Endothelial cell of umbilical vein (primary cell): ENCODE measurements at regions of chr18 and their contacts with region 1.

Region 1: GRCh38 chr18:8654503-8655451 is 45.5 kb downstream of the RAB12 start:
- DNase-seq: peak; percentile 29
- H3K4me3 ChIP-seq: no peak overlapping the region
- H3K27ac ChIP-seq: no peak overlapping the region
- H3K4me1 ChIP-seq: peaks cover 2% of the 10 kb centered on the region
- H3K27me3 ChIP-seq: peaks cover 2 to 6% of the 10 kb centered on the region in 2 experiments
- CTCF ChIP-seq: peak; percentile 21 to 45
- POLR2A ChIP-seq: no peak

Region 2: DNA sequence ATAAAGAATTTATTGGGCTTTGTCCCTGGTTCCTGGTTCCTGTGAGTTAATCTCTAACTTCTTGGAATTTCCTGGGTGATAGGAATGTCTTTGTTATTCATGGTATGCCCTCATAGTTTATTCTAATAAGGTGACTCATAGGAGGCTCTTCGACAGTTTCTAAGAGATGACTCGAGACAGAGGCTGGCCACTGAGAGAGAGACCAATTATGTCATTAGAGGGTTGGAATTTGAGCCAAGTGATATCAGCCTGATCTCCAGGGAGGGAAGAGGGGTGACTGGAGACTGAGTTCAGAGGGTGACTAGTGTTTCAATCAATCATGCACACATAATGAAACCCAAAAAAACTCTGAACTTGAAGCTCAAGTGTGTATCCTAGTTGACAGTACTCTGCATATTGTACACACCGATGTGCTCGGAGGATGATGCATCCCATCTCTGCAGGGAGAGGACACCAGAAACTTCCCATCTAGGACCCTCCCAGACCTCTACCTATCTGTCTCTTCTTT is 236.2 kb after region 1 on chr18:
- CTCF ChIA-PET with region 1: no interaction called
- POLR2A ChIA-PET with region 1: no interaction called
- dilution Hi-C with region 1: no loop called
- intact Hi-C with region 1: loop called (anchors 10 kb)
- DNase-seq: peak; percentile 83
- H3K4me3 ChIP-seq: no peak overlapping the region
- H3K27ac ChIP-seq: peak overlapping the region; percentile 67
- H3K4me1 ChIP-seq: peaks cover 21% of the 10 kb centered on the region
- H3K27me3 ChIP-seq: no peaks in the 10 kb centered on the region
- CTCF ChIP-seq: no peak
- POLR2A ChIP-seq: no peak

Region 3: DNA sequence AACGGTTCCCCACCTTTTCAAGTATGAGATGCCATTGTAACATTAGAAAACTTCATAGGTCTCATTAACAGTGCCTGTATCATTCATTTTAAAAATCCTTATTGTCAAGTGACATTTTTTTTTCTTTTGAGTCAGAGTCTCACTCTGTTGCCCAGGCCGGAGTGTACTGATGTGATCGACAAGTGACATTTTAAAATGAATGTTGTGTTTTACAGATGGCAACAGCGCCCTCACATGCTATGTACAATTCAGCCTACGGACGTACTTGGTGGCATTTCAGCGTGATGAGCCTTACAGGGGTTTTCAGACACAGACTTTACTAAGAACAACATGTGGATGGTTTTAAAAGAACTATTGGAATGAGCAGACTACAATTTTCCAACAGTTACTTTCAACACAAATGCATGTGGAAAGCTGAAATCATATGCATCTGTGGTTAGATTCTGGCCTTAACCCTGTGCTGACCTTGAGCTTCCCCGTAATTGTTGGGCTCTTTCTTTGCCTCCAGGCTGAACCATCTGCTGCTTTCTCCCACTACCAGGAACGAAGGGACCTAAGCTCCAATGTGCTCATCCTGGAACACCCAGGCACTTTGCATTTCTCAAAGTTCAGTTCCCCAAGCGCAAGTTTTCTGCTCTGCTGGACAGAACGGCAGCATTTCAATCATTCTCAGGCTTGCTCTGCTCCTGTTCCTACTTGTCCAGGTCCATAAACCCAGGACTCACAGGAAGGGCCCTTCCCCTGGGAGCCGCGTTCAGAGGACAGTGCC is 327.8 kb after region 1 on chr18:
- CTCF ChIA-PET with region 1: interaction called, 146 read pairs
- POLR2A ChIA-PET with region 1: no interaction called
- dilution Hi-C with region 1: loop called (anchors 25 kb)
- intact Hi-C with region 1: loop called (anchors 1 kb)
- DNase-seq: peak; percentile 58
- H3K4me3 ChIP-seq: no peak overlapping the region
- H3K27ac ChIP-seq: no peak overlapping the region
- H3K4me1 ChIP-seq: no peaks in the 10 kb centered on the region
- H3K27me3 ChIP-seq: no peaks in the 10 kb centered on the region
- CTCF ChIP-seq: peak; percentile 39 to 40
- POLR2A ChIP-seq: no peak

Region 4: GRCh38 chr18:9055185-9055584 is 400.4 kb after region 1 on chr18:
- CTCF ChIA-PET with region 1: interaction called, 3 read pairs
- POLR2A ChIA-PET with region 1: no interaction called
- dilution Hi-C with region 1: no loop called
- intact Hi-C with region 1: loop called (anchors 10 kb)
- DNase-seq: peak; percentile 81
- H3K4me3 ChIP-seq: no peak overlapping the region
- H3K27ac ChIP-seq: no peak overlapping the region
- H3K4me1 ChIP-seq: peaks cover 9% of the 10 kb centered on the region
- H3K27me3 ChIP-seq: no peaks in the 10 kb centered on the region
- CTCF ChIP-seq: no peak
- POLR2A ChIP-seq: no peak

Region 5: GRCh38 chr18:9147440-9148202 is 492.8 kb after region 1 on chr18:
- CTCF ChIA-PET with region 1: interaction called, 5 read pairs
- POLR2A ChIA-PET with region 1: interaction called, 4 read pairs
- dilution Hi-C with region 1: no loop called
- intact Hi-C with region 1: loop called (anchors 5 kb)
- DNase-seq: peak; percentile 79
- H3K4me3 ChIP-seq: no peak overlapping the region
- H3K27ac ChIP-seq: no peak overlapping the region
- H3K4me1 ChIP-seq: peaks cover 12% of the 10 kb centered on the region
- H3K27me3 ChIP-seq: no peaks in the 10 kb centered on the region
- CTCF ChIP-seq: peak; percentile 52 to 63
- POLR2A ChIP-seq: no peak